IMR-90 (cell line): ENCODE measurements at regions of chr5 and their contacts with region 1.

Region 1: GRCh38 chr5:170809551-170809950 is 26.0 kb downstream of the GABRP start:
- DNase-seq: peak; percentile 71
- ATAC-seq: peak; percentile 97
- H3K4me3 ChIP-seq: no peak overlapping the region
- H3K27ac ChIP-seq: no peak overlapping the region
- H3K4me1 ChIP-seq: no peaks in the 10 kb centered on the region
- H3K27me3 ChIP-seq: peaks cover 6% of the 10 kb centered on the region
- CTCF ChIP-seq: peak; percentile 76
- POLR2A ChIP-seq: 0 out of 2 replicates have a peak, but pooled peaks have one; percentile 27
- RAD21 ChIP-seq: peak; percentile 92

Region 2: GRCh38 chr5:170986598-170986997 is 177.0 kb after region 1 on chr5:
- CTCF ChIA-PET with region 1: no interaction called
- POLR2A ChIA-PET with region 1: no interaction called
- dilution Hi-C with region 1: no loop called
- in situ Hi-C with region 1: no loop called
- intact Hi-C with region 1: loop called (anchors 5 kb)
- DNase-seq: peak; percentile 42
- ATAC-seq: peak; percentile 51; the same call in 1 of the 2 replicates
- H3K4me3 ChIP-seq: no peak overlapping the region
- H3K27ac ChIP-seq: no peak overlapping the region
- H3K4me1 ChIP-seq: no peaks in the 10 kb centered on the region
- H3K27me3 ChIP-seq: no peaks in the 10 kb centered on the region
- CTCF ChIP-seq: peak; percentile 45
- POLR2A ChIP-seq: no peak
- RAD21 ChIP-seq: peak; percentile 51

Region 3: GRCh38 chr5:171162602-171163001 is 353.1 kb after region 1 on chr5:
- CTCF ChIA-PET with region 1: no interaction called
- POLR2A ChIA-PET with region 1: no interaction called
- dilution Hi-C with region 1: no loop called
- in situ Hi-C with region 1: loop called (anchors 25 kb)
- intact Hi-C with region 1: no loop called
- DNase-seq: peak; percentile 25
- ATAC-seq: peak; percentile 76
- H3K4me3 ChIP-seq: no peak overlapping the region
- H3K27ac ChIP-seq: no peak overlapping the region
- H3K4me1 ChIP-seq: no peaks in the 10 kb centered on the region
- H3K27me3 ChIP-seq: no peaks in the 10 kb centered on the region
- CTCF ChIP-seq: peak; percentile 43
- POLR2A ChIP-seq: no peak
- RAD21 ChIP-seq: peak; percentile 27; the same call in 1 of the 2 replicates

Region 4: GRCh38 chr5:171336521-171337209 is 527.1 kb after region 1 on chr5:
- CTCF ChIA-PET with region 1: interaction called, 4 read pairs
- POLR2A ChIA-PET with region 1: no interaction called
- dilution Hi-C with region 1: no loop called
- in situ Hi-C with region 1: loop called (anchors 5 kb)
- intact Hi-C with region 1: loop called (anchors 1 kb)
- DNase-seq: peak; percentile 64
- ATAC-seq: peak; percentile 97
- H3K4me3 ChIP-seq: peak overlapping the region; percentile 52
- H3K27ac ChIP-seq: no peak overlapping the region
- H3K4me1 ChIP-seq: no peaks in the 10 kb centered on the region
- H3K27me3 ChIP-seq: peaks cover 22% of the 10 kb centered on the region
- CTCF ChIP-seq: peak; percentile 80
- POLR2A ChIP-seq: 0 out of 2 replicates have a peak, but pooled peaks have one; percentile 23
- RAD21 ChIP-seq: peak; percentile 88